ENCODE measurements at regions of chr11 and their contacts with region 1.

Region 1: DNA sequence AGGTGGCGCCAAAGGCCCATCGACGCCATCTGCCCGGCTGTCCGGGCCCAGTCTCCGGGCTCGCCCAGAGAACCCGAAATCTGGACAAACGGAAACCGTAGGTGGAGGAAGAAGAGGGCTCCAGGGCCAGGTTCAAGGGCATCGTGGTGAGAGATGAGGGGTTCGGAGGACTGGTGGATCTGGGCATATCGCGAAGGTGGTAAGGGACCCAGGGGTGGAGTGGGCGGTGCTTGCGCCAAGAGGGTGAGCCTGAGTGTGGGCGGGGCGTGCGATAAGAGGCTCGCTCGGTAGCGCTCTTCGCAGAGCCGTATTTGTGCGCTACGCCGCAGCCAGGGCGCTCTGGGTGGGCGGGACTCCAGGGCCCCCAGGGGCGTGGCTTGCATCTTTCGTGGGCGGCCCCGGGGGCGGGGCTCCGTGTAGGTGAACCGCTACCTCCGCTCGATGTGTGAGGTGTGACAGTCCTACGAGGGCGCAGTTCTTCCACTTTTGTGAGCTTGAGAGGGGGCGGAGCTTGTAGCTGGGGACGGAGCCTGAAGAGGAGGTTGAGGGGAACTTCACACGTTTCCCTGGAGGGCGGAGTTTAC is 4.8 kb downstream of the CD248 start:
- DNase-seq: peak; percentile 94

Region 2: DNA sequence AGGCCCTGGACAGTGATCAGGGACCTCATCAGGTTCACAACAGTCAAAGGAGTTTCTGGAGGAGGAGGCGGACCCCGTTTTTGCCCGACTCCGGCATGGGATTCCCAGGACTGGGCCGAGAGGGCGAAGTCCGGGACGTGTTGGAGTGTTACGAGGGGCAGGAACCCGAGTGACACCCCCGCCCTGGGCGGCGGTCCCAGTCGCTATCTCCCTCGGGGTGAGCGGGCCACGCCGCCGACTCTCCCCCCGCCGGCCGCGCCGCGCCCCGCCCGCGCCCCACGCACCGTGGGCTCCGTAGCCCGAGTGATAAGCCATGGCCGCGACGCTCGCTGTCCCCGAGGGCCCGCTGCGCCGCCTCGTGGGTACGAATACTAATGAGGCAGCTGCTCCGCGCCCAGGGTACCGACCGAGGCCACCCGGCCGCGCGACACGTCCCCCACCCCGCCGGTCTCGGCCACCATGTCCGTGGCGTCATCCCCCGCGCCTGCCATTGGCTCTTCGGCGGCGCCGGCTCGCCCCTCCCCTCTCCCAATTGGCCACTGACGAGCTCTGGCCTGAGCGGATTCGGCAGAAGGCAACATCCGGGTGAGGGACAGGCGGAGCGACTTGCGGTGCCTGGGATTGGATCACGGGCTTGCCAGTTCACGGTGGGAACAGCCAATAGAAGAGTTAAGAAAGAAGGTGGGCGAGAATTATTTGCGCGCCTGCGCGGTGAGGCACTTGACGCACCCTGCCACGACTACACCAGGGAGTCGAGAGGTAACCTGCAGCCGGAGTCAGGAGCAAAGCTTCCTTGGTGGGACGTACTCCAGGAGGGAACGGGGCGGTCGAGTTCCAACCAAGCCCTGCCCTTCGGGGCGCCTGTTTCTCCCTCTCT is 23.1 kb before region 1 on chr11 and contains the start of gene YIF1A:
- CTCF ChIA-PET with region 1: interaction called, 11 read pairs
- POLR2A ChIA-PET with region 1: interaction called, 36 read pairs
- DNase-seq: peak; percentile 99

Region 3: DNA sequence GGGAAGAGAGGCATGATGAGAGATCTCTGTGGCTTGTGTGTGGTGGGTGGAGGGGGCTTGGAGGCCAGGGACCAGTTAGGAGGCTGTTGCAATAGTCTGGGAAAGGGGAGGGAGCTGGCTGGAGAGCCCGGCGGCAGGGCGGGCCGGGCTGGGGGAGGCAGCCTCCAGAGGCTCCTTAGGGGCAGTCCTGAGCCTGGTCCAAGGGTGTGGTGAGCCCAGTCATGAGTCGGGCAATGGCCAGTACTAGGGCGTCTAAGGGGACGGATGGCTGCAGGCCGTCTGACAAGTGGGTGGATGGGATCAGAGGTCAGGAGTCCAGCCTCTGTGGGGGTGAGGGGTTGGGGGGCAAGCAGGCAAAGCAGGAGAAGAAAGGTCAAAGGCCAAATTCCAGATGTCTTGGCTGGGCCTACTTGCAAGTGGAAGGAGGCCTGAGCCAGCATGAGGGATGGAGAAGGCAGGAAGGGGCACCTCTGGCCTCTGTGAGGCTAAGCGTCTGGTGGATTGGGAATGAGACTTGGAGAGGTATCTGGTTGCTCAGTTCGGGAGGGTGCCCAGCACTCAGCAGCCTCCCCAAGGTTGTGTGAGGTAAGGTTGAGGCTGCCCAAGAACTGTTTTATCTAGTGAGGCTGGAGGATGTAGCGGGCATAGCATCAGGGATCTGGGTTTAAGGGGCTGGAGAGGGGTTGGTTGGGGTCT is 10.8 kb after region 1 on chr11:
- CTCF ChIA-PET with region 1: interaction called, 18 read pairs
- POLR2A ChIA-PET with region 1: interaction called, 5 read pairs
- DNase-seq: no peak

Region 4: DNA sequence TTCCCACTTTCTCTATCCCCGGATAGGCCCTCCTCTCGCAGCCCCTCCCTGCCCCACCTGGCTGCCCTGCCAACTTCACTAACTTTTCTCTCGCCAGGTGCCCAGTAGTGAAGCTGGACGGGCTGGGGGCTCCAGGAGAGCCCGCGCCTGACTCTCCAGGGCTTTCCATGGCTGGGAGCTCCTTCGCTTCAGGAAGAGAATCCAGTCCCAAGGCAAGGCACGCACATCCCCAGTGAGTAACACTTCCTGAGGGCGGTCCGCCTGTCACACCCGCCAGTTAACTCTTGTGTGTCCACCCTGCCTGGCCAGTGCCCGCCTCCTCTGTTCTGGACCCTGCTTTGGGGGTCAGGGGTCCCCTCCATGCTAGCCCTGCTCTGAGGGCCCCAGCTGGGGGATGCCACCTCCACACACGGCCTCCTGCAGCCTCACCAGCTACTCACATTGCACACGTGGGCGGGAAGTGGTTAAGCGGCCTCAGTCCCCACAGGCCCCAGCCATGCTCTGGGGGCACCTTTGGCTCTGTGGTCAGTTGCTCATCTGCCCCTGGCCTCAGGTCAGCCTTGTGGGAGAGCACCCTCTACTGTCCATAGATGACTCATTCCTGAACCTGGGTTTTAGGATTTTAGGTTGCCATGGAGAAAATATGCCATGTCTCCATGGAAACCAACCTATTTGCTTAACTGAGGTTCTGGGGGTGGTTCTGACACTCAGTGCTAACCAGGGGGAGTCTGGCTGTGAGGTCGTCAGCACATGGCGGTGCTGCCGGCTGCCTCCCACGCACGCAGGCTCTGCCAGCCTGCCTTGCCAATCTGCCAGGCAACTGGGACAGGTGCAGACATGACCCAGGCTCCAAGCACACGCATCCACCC is 24.4 kb after region 1 on chr11 and contains the start of gene RIN1:
- CTCF ChIA-PET with region 1: interaction called, 21 read pairs
- POLR2A ChIA-PET with region 1: interaction called, 4 read pairs
- DNase-seq: no peak

Region 5: DNA sequence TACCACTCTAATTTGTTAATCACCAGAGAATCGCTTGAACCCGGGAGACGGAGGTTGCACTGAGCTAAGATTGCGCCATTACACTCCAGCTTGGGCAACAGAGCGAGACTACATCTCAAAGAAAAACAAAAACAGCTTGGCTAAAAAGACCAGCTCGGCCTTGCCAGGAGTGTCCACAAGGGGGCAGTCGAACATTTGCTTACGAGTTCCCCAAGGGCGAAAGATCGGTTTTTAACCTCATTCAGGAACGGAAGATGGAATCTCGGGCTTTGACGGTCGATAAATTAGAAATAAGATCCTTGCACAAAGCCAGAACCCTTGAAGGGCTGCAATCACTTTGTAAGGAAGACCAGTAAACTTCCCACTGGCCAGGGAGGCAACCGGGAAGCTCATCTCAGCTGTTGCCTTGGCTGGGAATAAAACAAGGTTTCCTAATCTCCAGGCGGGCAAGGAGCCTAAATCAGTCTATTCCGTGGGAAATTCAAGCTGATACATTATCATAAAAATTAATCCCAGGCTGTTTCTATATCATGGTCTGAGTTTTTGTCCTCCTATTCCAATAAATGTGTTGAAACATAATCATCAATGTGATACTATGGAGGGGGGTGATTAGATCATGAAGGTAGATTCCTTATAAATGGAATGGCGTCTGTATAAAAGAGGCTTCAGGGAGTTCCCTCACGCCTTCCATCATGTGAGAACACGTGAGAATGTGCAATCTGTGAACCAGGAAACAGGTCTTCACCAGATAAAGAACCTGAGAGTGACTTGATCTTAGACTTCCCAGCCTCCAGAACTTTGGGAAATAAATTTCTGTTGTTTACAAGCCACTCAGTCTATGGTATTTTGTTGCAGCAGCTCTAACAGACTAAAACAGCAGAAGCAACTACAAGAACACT is 74.4 kb after region 1 on chr11:
- CTCF ChIA-PET with region 1: interaction called, 31 read pairs
- POLR2A ChIA-PET with region 1: no interaction called
- DNase-seq: peak; percentile 68